Activated CD4-positive, alpha-beta T cell treated with anti-CD3 and anti-CD28 coated beads, Interleukin-2, amount 10 ng/mL, durations not matched to agents 24 days and 14 days (primary cell): ENCODE measurements at regions of chr7 and their contacts with region 1.

Region 1: DNA sequence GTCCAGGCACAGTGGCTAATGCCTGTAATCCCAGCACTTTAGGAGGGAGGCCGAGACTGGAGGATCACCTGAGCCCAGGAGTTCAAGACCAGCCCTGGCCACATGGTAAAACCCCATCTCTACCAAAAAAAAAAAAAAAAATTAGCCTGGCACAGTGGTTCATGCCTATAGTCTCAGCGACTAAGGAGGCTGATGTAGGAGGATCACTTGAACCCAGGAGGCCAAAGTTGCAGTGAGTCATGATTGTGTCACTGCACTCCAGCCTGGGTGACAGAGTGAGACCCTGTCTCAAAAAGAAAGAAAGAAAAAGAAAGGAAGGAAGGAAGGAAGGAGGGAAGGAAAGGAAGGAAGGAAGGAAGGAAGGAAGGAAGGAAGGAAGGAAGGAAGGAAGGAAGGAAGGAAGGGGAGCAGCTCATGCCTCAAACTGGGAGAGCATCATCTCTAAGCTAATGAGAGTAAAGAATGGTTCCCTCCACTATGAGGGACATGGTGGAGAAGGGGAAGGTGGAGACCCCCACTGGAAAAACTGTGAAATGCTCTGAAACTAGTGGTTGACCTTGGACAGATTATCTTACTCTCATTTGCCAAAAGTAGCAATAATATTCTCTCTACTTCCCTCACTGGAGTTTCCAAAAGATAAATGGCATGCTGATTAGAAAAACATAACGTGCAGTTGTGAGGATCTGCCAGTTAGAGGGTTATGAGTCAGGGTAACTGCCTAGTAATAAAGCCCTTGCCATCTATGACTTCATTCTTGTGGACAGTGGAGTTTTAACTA is 16.8 kb downstream of the GIMAP5 start:
- DNase-seq: peak; percentile 76
- H3K4me3 Mint-ChIP-seq: peak overlapping the region; percentile 64
- H3K27ac Mint-ChIP-seq: peak overlapping the region; percentile 95
- H3K4me1 Mint-ChIP-seq: peaks cover 58% of the 10 kb centered on the region
- H3K27me3 Mint-ChIP-seq: peaks cover 2% of the 10 kb centered on the region

Region 2: GRCh38 chr7:150378853-150379440 is 375.1 kb before region 1 on chr7 and contains the start of gene ZNF775:
- intact Hi-C with region 1: loop called (anchors 5 kb)
- DNase-seq: peak; percentile 98
- H3K4me3 Mint-ChIP-seq: peak within 1 kb of the TSS; percentile 96
- H3K27ac Mint-ChIP-seq: peak within 1 kb of the TSS; percentile 80
- H3K4me1 Mint-ChIP-seq: peaks cover 44% of the 10 kb centered on the region
- H3K27me3 Mint-ChIP-seq: no peaks in the 10 kb centered on the region
- total RNA-seq, gene ZNF775: 4.2 and 5.5 TPM in 2 replicates

Region 3: DNA sequence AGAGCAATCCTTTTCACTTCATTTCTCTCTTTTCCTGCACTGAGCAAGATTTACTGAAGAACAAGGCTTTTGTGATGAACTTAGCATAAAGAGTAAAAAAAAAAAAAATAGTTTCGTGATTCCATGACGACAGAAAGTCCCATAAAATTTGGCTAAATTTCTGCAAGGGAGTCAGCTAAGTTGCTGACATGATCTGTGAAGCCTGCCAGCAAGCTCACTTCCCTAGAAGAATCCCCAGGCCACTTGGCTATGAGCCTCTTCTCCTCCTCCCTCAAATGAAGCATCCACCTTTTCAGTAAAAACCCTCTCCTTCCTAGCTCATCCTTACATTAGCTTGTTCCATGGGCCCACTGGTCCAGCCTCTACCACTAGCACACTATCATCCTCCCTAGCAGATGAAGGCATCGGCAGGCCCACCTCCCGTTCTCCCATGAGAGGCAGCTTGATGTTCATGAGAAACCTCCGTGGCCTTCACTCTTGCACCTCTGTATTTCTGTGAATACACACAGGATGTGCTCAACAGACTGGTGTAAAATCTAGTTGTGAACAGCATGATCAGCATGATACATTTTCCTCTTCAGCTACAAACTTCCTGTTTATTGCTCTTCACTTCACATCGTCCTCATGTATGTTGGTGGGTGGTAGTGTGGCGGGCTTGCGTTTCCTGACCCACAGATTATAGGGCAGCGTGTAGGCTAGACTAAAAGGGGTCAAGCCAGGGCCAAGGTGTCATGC is 272.7 kb before region 1 on chr7:
- intact Hi-C with region 1: loop called (anchors 1 kb)
- DNase-seq: peak; percentile 90
- H3K4me3 Mint-ChIP-seq: peak overlapping the region; percentile 86
- H3K27ac Mint-ChIP-seq: peak overlapping the region; percentile 100
- H3K4me1 Mint-ChIP-seq: peaks cover 87% of the 10 kb centered on the region
- H3K27me3 Mint-ChIP-seq: no peaks in the 10 kb centered on the region

Region 4: GRCh38 chr7:150586785-150587152 is 167.2 kb before region 1 on chr7:
- intact Hi-C with region 1: loop called (anchors 5 kb)
- DNase-seq: peak; percentile 73
- H3K4me3 Mint-ChIP-seq: peak overlapping the region; percentile 71
- H3K27ac Mint-ChIP-seq: peak overlapping the region; percentile 86
- H3K4me1 Mint-ChIP-seq: peaks cover 46% of the 10 kb centered on the region
- H3K27me3 Mint-ChIP-seq: no peaks in the 10 kb centered on the region

Region 5: GRCh38 chr7:150668472-150668911 is 85.5 kb before region 1 on chr7:
- intact Hi-C with region 1: loop called (anchors 1 kb)
- DNase-seq: peak; percentile 91
- H3K4me3 Mint-ChIP-seq: peak overlapping the region; percentile 43
- H3K27ac Mint-ChIP-seq: peak overlapping the region; percentile 93
- H3K4me1 Mint-ChIP-seq: peaks cover 69% of the 10 kb centered on the region
- H3K27me3 Mint-ChIP-seq: no peaks in the 10 kb centered on the region

Region 6: DNA sequence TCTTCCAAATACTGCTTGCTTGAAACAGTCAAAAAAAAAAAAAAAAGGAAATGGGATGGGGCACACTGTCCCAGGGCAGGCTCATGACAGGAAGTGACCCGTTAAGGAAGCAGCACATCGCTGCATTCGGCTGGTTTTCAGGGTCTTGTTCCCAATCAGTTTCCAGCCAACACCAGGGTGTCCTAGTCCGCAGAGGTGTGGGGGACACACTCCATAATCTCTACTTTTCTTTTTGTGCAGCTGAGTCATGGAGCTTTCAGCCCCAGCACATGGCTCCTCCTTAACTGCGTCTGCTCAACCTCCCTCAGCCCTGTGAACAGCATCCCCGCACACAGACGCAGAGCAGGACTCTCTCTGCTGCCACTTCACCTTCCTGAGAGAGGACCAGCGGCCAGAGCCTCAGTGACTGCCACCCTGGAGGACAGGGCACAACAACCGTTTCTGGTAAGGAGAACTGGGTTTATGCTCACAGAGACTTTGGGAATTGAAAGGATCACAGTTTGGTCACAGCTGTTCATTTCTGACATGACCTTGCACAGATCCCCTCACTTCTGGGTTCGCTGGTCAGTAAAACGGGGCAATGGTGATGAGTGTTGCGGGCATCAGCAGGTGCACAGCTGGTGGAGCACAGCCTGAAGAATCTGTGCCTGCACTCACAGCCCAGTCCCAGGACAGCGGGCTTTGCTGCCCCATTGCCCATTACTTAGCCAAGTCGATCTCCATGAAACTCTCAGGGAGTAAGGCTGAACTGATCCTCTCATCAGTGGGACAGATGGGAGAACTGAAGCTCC is 16.6 kb before region 1 on chr7 and contains the start of gene GIMAP5:
- intact Hi-C with region 1: loop called (anchors 1 kb)
- DNase-seq: peak; percentile 89
- H3K4me3 Mint-ChIP-seq: peak within 1 kb of the TSS; percentile 89
- H3K27ac Mint-ChIP-seq: peak within 1 kb of the TSS; percentile 94
- H3K4me1 Mint-ChIP-seq: peaks cover 69% of the 10 kb centered on the region
- H3K27me3 Mint-ChIP-seq: no peaks in the 10 kb centered on the region
- total RNA-seq, gene GIMAP5: 44.4 and 50.9 TPM in 2 replicates

Region 7: GRCh38 chr7:150787321-150788281 is 33.6 kb after region 1 on chr7:
- intact Hi-C with region 1: no loop called
- DNase-seq: no peak
- H3K4me3 Mint-ChIP-seq: no peak overlapping the region
- H3K27ac Mint-ChIP-seq: no peak overlapping the region
- H3K4me1 Mint-ChIP-seq: peaks cover 10% of the 10 kb centered on the region
- H3K27me3 Mint-ChIP-seq: peaks cover 21% of the 10 kb centered on the region

Region 8: GRCh38 chr7:151381348-151382078 is 627.5 kb after region 1 on chr7:
- intact Hi-C with region 1: no loop called
- DNase-seq: peak; percentile 62
- H3K4me3 Mint-ChIP-seq: no peak overlapping the region
- H3K27ac Mint-ChIP-seq: no peak overlapping the region
- H3K4me1 Mint-ChIP-seq: peaks cover 5% of the 10 kb centered on the region
- H3K27me3 Mint-ChIP-seq: peaks cover 26% of the 10 kb centered on the region